ENCODE measurements at regions of chr16 and their contacts with region 1.

Region 1: DNA sequence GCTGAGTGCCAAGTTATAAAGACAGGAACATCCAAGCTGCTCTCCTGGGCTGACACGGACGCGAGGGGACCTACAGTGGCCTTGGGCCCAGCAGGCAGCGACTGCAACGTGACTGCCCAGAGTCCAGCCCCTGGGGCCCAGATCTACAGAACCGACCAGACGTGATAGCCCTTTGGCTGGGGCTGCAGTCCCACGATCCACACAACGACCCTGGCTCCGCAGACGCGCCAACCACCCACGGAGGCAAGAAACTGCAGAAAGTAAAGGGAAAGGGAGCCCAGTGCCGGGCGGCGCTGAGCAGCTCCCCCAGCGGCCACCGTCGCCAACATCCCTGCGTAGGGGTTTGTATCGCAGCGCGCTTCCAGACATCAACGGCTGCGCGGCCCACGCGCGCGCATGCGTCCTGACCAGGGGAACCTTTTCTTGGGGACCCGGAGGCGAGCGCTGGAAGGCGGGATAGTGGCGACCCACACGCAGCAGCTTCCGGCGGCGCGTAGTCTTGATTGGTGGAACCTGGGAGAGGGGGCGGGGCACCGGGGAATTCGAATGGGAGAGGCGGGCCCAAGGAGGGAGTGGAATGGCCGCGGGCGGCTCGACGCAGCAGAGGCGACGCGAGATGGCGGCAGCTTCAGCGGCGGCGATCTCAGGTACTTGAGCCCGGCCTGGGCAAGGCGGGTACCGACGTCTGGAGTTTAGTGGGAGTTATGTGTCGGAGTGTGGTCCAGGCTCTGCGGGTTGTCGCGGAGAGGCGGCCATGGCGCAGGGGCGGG is at the start of gene KIF22:
- DNase-seq: peak; percentile 100
- ATAC-seq: peak; percentile 95
- H3K4me3 Mint-ChIP-seq: peak within 1 kb of the TSS; percentile 91
- H3K27ac Mint-ChIP-seq: peak within 1 kb of the TSS; percentile 97
- H3K4me1 Mint-ChIP-seq: peaks cover 30% of the 10 kb centered on the region
- H3K27me3 Mint-ChIP-seq: no peaks in the 10 kb centered on the region
- total RNA-seq, gene KIF22: 153 to 168 TPM

Region 2: GRCh38 chr16:29729116-29729521 is 61.2 kb before region 1 on chr16:
- CTCF ChIA-PET with region 1: interaction called, 7 read pairs
- POLR2A ChIA-PET with region 1: interaction called, 12 read pairs
- intact Hi-C with region 1: loop called in 1 of 2 experiments (anchors 1 kb)
- DNase-seq: no peak
- ATAC-seq: no peak
- H3K4me3 Mint-ChIP-seq: no peak overlapping the region
- H3K27ac Mint-ChIP-seq: no peak overlapping the region
- H3K4me1 Mint-ChIP-seq: peaks cover 37% of the 10 kb centered on the region
- H3K27me3 Mint-ChIP-seq: no peaks in the 10 kb centered on the region

Region 3: GRCh38 chr16:29757950-29758466 is 32.4 kb before region 1 on chr16:
- CTCF ChIA-PET with region 1: interaction called, 16 read pairs
- POLR2A ChIA-PET with region 1: interaction called, 6 read pairs
- intact Hi-C with region 1: loop called in 1 of 2 experiments (anchors 2 kb)
- DNase-seq: no peak
- ATAC-seq: no peak
- H3K4me3 Mint-ChIP-seq: no peak overlapping the region
- H3K27ac Mint-ChIP-seq: no peak overlapping the region
- H3K4me1 Mint-ChIP-seq: peaks cover 32% of the 10 kb centered on the region
- H3K27me3 Mint-ChIP-seq: no peaks in the 10 kb centered on the region

Region 4: DNA sequence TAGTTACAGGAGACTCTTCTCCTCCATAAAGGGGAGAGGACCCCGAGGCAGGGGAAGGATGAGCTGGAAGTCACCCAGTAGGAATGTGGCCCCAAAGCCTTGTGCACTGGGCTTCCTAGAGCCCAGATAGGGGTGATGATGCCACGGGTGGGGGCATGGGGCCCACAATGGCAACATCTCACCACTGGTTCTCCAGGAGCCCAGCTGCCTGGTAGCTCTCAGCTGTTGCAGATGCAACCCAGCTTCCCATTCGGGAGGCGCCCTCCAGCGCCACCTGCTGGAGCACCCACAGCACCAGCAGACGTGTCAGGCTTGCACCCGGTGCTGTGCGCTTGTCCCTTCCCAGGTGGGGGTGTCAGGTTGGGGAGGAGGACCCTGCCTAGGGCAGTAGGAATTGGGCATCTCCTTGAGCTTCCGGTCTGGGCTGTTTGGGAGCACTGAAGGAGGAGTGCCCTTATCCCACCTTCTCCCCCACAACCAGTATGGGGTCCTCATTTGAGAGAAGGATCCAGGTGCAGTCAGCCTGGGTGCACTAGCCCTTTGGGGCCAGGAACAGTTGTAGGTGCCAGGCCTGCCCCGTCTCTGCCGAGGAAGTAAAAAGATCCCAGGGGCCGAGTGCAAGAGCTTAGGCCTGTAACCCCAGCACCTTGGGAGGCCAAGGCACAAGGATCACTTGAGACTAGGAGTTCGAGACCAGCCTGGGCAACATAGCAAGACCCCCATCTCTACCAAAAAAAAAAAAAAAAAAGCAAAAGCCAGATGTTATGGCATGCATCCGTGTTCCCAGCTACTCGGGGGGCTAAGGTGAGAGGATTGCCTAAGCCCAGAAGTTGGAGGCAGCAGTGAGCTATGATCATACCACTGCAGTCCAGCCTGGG is 58.3 kb after region 1 on chr16:
- CTCF ChIA-PET with region 1: interaction called, 5 read pairs
- POLR2A ChIA-PET with region 1: no interaction called
- intact Hi-C with region 1: loop called in 1 of 2 experiments (anchors 1 kb)
- DNase-seq: peak; percentile 93
- ATAC-seq: peak; percentile 97
- H3K4me3 Mint-ChIP-seq: no peak overlapping the region
- H3K27ac Mint-ChIP-seq: no peak overlapping the region
- H3K4me1 Mint-ChIP-seq: peaks cover 7% of the 10 kb centered on the region
- H3K27me3 Mint-ChIP-seq: no peaks in the 10 kb centered on the region

Region 5: DNA sequence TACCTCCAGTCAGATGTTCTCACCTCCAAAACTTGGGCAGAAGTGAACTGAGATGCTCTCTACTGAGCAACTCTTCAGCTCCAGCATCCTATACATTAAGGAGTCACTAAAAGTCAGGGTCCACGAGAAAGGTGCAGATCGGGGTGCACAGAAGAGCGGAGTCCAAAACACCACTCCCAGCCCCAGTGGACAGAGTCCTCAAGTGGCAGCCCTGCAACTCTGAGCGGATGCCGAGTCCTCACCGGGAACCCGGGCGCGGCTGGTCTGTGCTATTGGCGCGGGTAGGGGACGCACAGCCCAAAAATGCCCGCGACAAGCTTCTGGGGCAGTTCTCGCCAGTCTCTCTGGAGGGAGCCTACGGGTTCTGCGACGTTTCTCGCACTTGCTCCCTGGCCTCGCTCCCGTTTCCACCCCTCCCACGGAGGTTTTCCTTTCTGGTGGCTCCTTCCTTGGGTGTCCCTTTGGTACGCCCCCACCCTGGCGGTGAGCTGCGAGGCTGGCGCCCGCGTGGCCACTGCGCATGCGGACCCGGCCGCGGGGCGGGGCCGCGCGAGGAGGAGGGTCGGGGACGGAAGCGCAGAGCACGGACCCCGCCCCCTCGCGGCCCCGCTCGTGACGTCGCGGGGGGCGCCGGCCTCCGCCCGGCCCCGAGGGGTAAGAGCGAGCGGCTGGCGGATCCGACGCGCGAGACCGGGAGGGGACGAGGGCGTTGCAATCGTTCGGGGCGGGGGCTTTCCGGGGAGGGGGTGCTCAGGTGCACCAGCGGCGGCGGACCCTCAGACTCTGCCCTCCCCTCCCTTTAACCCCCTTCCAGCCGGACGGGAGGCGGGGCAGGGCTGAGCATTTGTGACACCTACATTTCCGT is 171.3 kb after region 1 on chr16 and contains the start of gene TMEM219:
- CTCF ChIA-PET with region 1: interaction called, 3 read pairs
- POLR2A ChIA-PET with region 1: no interaction called
- intact Hi-C with region 1: loop called in 1 of 2 experiments (anchors 1 kb)
- DNase-seq: peak; percentile 94
- ATAC-seq: peak; percentile 95
- H3K4me3 Mint-ChIP-seq: peak within 1 kb of the TSS; percentile 88
- H3K27ac Mint-ChIP-seq: peak within 1 kb of the TSS; percentile 87
- H3K4me1 Mint-ChIP-seq: peaks cover 17% of the 10 kb centered on the region
- H3K27me3 Mint-ChIP-seq: no peaks in the 10 kb centered on the region
- total RNA-seq, gene TMEM219: 34.6 to 42.5 TPM

Region 6: DNA sequence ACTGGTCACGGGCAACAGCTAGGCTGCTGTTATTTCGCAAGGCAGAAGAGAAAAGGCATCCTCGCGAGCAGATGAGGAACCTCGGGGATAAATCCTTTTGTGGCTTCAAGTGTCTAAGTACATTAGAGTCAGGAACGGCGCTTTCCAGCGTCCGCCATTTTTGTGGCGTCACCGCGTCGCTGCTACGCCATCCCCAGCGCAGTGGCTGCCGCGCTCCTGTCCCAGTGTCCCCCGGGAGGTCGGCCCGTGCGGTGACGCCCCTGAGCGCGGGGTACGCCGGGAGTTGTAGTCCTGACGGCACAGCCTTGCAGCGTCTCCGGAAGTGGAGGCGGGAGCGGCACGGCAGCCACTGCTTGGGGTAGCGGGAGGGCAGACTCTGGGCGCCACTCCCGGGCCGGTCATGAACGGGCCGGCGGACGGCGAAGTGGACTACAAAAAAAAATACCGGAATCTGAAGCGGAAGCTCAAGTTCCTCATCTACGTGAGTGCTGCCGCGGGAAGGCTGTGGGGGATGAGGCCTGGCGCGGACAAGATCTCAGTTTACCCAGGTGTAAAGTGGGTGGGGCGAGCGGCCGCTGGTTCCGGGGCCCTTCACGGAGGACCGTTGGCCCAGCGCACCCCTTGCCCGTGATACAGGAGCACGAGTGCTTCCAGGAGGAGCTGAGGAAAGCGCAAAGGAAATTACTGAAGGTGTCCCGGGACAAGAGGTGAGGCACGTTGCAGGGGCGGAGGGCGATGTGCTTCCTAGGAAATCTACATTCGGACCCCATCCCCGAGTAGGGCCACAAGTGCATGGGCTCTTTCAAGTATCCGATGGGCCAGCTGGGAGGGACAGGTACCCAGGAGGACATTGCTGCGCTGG is 205.8 kb after region 1 on chr16 and contains the start of gene INO80E:
- CTCF ChIA-PET with region 1: no interaction called
- POLR2A ChIA-PET with region 1: no interaction called
- intact Hi-C with region 1: loop called in 1 of 2 experiments (anchors 1 kb)
- DNase-seq: peak; percentile 100
- ATAC-seq: peak; percentile 98
- H3K4me3 Mint-ChIP-seq: peak within 1 kb of the TSS; percentile 96
- H3K27ac Mint-ChIP-seq: peak within 1 kb of the TSS; percentile 98
- H3K4me1 Mint-ChIP-seq: peaks cover 25% of the 10 kb centered on the region
- H3K27me3 Mint-ChIP-seq: no peaks in the 10 kb centered on the region
- total RNA-seq, gene INO80E: 80.1 to 106 TPM

Region 7: DNA sequence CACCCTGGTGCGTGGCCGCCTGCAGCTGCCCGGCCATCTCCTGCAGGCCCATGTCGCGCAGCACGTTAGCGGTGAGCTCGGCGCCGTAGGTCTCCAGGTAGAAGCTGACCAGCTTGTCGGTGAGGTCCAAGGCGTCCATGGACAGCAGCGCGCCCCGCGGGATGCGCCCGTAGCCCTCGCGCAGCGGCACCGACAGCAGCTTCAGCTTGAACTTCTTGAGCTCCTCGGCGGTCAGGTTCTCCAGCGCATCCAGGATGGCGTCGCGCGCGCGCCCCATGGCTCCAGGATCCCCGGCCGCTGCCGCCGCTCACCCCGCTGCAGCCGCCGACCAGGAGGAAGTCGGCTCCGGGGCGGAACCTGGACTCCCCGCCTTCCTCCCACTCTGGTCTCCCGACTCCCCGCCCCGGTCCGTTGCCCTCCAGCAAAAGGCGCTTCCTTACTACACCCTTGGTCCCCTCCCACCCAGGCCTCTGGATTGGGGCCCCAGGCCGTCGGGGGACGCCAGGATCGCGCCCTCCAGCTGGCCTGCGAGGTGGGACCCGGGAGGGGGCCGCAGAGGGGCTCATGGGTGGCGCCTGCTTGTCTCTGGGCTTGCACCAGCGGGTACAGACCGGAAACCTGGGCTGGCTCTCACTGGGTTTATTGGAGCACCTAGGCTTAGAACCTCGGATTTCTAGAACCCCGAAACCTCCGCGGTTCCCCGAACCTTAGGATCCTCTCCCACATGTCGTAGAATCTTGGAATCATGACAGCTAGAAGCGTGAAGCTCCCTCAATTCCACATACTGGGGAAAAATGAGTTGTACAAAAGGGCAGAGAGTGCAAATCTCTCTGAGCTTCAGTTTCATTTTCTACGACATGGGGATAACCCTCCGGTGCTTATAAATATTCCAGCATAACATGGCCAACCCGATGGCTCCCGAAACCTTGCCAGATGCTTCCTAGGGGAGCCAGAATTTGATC is 1412.3 kb after region 1 on chr16 and contains the start of gene PYCARD:
- CTCF ChIA-PET with region 1: no interaction called
- POLR2A ChIA-PET with region 1: no interaction called
- intact Hi-C with region 1: no loop called
- DNase-seq: peak; percentile 53
- ATAC-seq: peak; percentile 7
- H3K4me3 Mint-ChIP-seq: peak within 1 kb of the TSS; percentile 71
- H3K27ac Mint-ChIP-seq: peak within 1 kb of the TSS; percentile 52
- H3K4me1 Mint-ChIP-seq: peaks cover 47% of the 10 kb centered on the region
- H3K27me3 Mint-ChIP-seq: peaks cover 3% of the 10 kb centered on the region
- total RNA-seq, gene PYCARD: 5.7 TPM